ENCODE measurements at regions of chr19 and their contacts with region 1.

Region 1: GRCh38 chr19:3075895-3076431 is 13.7 kb upstream of the TLE5 start:
- DNase-seq: peak in 1 of 2 donors; percentile 70
- ATAC-seq: peak; percentile 44 to 82 (median 72)
- H3K4me3 ChIP-seq: peak overlapping the region in 1 of 10 donors; percentile 25
- H3K27ac ChIP-seq: no peak overlapping the region
- H3K4me1 ChIP-seq: peaks cover 0 to 17% (median 8%) of the 10 kb centered on the region in 9 donors
- H3K27me3 ChIP-seq: no peaks in the 10 kb centered on the region
- CTCF ChIP-seq: peak; percentile 86 to 95 (median 90)

Region 2: DNA sequence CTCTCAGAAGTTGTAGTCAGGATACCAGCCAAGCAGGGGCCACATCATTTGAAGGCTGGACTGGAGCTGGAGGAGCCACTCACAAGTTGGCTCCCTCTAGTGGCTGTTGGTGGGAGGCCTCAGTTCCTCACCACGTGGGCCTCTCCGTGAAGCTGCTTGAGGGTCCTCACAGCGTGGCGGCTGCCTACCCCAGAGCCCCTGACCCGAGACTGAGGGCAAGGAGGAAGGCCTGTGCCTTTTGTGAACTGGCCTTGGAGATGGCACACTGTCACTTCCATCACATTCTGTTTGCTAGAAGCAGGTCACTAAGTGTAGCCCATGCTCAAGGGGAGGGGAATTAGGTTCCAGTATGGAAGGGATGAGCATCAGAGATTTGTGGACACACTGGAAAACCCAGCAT is 32.8 kb after region 1 on chr19:
- intact Hi-C with region 1: loop called in 2 of 10 experiments (anchors 5 kb)
- DNase-seq: peak; percentile 53 to 55
- ATAC-seq: peak in 6 of 8 donors; percentile 26 to 41 (median 36)
- H3K4me3 ChIP-seq: no peak overlapping the region
- H3K27ac ChIP-seq: peak overlapping the region in 1 of 10 donors; percentile 31
- H3K4me1 ChIP-seq: peaks cover 7 to 59% (median 22%) of the 10 kb centered on the region in 9 donors
- H3K27me3 ChIP-seq: no peaks in the 10 kb centered on the region
- CTCF ChIP-seq: peak; percentile 61 to 92 (median 79)

Region 3: DNA sequence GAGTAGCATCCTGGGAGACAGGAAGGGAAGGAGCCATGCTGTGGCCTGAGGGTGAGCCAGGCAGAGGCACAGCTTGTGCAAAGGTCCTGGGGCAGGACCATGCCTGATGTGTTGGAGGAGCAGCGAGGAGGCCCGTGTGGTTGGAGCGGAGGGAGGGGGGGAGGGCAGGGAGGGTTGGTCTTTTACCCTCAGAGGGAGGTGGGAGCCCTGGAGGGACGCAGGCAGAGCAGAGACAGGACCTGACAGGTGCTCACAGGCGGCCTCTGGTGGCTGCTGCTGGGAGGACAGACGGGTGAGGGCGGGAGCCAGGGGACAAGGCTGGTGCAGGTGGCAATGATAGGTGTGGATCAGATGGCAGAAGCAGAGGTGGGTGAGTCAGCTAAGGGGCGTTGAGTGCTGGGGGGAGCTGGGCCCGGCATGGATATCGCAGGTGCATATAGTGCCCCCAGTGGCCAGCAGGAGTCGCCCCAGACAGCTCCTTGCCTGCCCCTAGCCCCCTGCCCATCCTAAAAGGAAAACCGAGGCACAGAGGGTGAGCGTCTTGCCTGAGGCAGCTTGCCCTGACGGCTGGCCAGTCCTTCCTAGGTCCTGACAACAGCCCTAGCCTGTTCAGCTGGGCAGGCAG is 50.0 kb after region 1 on chr19:
- intact Hi-C with region 1: loop called in 4 of 10 experiments (anchors 2 to 10 kb)
- DNase-seq: peak; percentile 58 to 75
- ATAC-seq: peak; percentile 17 to 76 (median 62)
- H3K4me3 ChIP-seq: no peak overlapping the region
- H3K27ac ChIP-seq: no peak overlapping the region
- H3K4me1 ChIP-seq: peaks cover 0 to 11% (median 0%) of the 10 kb centered on the region in 9 donors
- H3K27me3 ChIP-seq: no peaks in the 10 kb centered on the region
- CTCF ChIP-seq: peak; percentile 46 to 81 (median 74)